Aorta (tissue), 5 donors: ENCODE measurements at regions of chr5 and their contacts with region 1.

Region 1: GRCh38 chr5:111742177-111742994 is 14.6 kb downstream of the NREP start:
- DNase-seq: no peak
- ATAC-seq: peak; percentile 78
- H3K4me3 ChIP-seq: peak overlapping the region in 1 of 2 donors; percentile 50
- H3K27ac ChIP-seq: peak overlapping the region in 1 of 2 donors; percentile 23
- H3K4me1 ChIP-seq: peaks cover 0 to 9% of the 10 kb centered on the region in 2 donors
- H3K27me3 ChIP-seq: no peaks in the 10 kb centered on the region

Region 2: DNA sequence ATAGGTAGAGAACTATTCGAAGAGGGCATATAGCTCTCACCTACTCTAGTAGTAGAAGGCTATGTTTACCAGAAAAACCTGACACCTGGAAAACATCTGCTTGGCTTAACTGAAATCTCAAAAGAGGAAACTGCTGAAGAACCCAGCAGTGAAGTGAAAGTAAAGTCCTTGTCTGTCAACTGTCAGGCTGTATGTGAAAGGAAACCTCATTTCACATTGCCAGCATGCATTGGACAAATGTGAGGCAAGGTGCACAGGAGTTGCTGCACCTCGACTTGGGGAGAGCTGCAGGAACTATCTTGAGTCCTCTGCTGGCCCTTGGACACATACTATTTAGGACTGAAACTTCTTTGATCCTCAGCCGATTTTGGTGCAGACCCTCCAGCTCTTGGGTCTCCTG is 38.7 kb before region 1 on chr5:
- intact Hi-C with region 1: no loop called
- DNase-seq: no peak
- ATAC-seq: no peak
- H3K4me3 ChIP-seq: no peak overlapping the region
- H3K27ac ChIP-seq: no peak overlapping the region
- H3K4me1 ChIP-seq: no peaks in the 10 kb centered on the region
- H3K27me3 ChIP-seq: no peaks in the 10 kb centered on the region

Region 3: GRCh38 chr5:112004867-112005622 is 262.7 kb after region 1 on chr5:
- intact Hi-C with region 1: loop called in 1 of 2 experiments (anchors 10 kb)
- DNase-seq: no peak
- ATAC-seq: peak; percentile 65
- H3K4me3 ChIP-seq: no peak overlapping the region
- H3K27ac ChIP-seq: no peak overlapping the region
- H3K4me1 ChIP-seq: peaks cover 2 to 6% of the 10 kb centered on the region in 2 donors
- H3K27me3 ChIP-seq: no peaks in the 10 kb centered on the region